ENCODE measurements at regions of chr12 and their contacts with region 1.

Region 1: GRCh38 chr12:69585189-69586062 is at the start of gene CCT2:
- DNase-seq: peak; percentile 98
- ATAC-seq: peak; percentile 95
- H3K4me3 Mint-ChIP-seq: peak within 1 kb of the TSS; percentile 97
- H3K27ac Mint-ChIP-seq: peak within 1 kb of the TSS; percentile 96
- H3K4me1 Mint-ChIP-seq: peaks cover 27% of the 10 kb centered on the region
- H3K27me3 Mint-ChIP-seq: no peaks in the 10 kb centered on the region
- CTCF ChIP-seq: peak; percentile 48
- total RNA-seq, gene CCT2: 389 to 403 TPM

Region 2: DNA sequence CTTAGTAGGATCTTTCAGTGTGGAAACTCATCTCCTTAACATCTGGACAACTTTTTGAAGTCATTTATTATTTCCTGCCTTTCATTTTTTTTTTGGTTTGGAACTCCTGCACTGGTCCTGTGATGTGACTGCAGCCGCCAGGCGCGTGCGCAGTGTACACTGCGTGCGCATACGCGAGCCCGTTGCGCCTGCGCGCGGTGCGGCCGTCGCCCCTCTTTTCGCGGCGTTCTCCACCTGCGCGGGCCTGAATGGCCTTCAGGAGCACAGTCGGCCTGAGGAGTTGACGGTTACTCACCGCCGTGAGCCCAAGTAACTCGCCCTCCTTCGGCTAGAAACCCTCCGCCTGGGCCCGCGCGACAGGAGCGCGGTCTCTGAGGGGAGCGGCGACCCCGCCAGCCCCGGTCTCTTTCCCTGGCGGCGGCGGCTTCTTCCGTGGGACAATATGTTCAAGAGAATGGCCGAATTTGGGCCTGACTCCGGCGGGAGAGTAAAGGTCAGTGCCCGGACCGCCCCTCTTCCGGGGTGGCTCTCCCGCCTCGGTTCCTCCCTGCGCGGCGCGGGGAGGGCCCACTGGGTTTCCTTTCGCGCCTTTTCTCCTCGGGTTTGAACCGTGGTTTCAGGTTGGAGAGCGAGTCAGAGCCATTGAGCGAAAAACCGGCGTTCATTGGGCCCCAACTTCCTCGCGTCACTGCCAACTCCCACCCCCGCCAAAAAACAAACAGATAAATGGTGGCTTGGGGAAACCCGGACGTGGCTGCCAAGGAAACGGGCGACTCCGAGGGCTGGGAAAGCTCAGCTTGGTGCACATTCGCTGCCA is 225.7 kb before region 1 on chr12 and contains the start of gene YEATS4:
- CTCF ChIA-PET with region 1: interaction called, 10 read pairs
- POLR2A ChIA-PET with region 1: interaction called, 10 read pairs
- intact Hi-C with region 1: loop called (anchors 5 kb)
- DNase-seq: peak; percentile 95
- ATAC-seq: peak; percentile 82
- H3K4me3 Mint-ChIP-seq: peak within 1 kb of the TSS; percentile 77
- H3K27ac Mint-ChIP-seq: peak within 1 kb of the TSS; percentile 96
- H3K4me1 Mint-ChIP-seq: peaks cover 23% of the 10 kb centered on the region
- H3K27me3 Mint-ChIP-seq: peaks cover under 1% of the 10 kb centered on the region
- CTCF ChIP-seq: no peak
- total RNA-seq, gene YEATS4: 54.0 to 60.9 TPM

Region 3: DNA sequence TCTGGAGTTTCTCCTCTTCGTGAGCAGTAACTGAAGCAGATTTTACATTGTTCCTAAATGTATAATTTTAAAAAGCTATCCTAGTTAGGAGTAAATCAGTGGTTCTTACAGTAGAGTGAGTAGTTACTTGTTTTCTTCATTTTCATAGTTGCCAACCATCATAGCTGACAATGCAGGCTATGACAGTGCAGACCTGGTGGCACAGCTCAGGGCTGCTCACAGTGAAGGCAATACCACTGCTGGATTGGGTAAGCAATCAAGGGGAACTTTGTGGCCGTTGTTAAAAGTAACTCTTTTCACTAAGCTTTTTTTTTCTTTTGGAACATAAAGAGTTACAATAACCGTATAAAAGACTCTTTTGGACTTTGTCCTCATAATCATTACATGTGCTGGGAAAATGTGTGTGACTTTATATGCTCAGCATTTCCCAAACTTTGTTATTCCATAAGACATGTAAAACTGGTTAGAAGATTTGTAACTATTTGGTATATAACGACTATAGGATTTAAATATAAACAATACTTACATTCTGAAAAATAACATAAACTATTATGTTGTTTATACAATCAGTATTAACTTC is 12.8 kb after region 1 on chr12:
- CTCF ChIA-PET with region 1: interaction called, 3 read pairs
- POLR2A ChIA-PET with region 1: interaction called, 12 read pairs
- intact Hi-C with region 1: no loop called
- DNase-seq: no peak
- ATAC-seq: no peak
- H3K4me3 Mint-ChIP-seq: no peak overlapping the region
- H3K27ac Mint-ChIP-seq: peak overlapping the region; percentile 42
- H3K4me1 Mint-ChIP-seq: peaks cover 12% of the 10 kb centered on the region
- H3K27me3 Mint-ChIP-seq: no peaks in the 10 kb centered on the region
- CTCF ChIP-seq: no peak